ENCODE measurements at regions of chr15 and their contacts with region 1.

Region 1: DNA sequence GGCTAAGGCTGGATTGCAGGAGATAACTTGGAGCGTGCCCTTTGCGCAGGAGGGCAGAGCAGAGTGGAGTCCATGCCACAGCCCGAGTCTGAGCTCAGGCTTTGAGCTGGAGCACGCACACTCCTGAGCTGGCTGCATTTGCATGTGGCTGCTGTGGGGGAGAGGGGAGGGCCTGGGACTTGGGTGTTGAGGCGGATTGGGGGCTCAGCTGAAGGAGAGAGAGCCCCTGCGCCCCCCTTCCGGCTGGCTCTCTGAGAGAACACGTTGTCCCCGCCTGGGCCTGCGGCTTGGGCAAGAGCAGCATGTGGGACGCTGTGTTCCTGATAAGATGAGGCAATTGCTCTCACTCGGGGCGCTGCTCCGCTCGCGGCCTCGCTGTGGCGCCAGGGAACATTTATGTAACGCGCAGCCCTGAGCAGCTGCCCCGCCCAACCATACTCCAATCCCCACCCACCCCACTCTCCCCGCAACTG is 39.1 kb downstream of the KLF13 start:
- DNase-seq: peak; percentile 98
- H3K4me3 ChIP-seq: peak overlapping the region in 5 of 8 donors; percentile 7 to 57 (median 25)
- H3K27ac ChIP-seq: peak overlapping the region in 7 of 8 donors; percentile 62 to 100 (median 96)
- H3K4me1 ChIP-seq: peaks cover 20 to 100% (median 100%) of the 10 kb centered on the region in 6 donors
- H3K27me3 ChIP-seq: no peaks in the 10 kb centered on the region
- CTCF ChIP-seq: peak in 10 of 11 experiments; percentile 35 to 78 (median 56)
- POLR2A ChIP-seq: peak in 2 of 3 donors; percentile 38 to 63

Region 2: DNA sequence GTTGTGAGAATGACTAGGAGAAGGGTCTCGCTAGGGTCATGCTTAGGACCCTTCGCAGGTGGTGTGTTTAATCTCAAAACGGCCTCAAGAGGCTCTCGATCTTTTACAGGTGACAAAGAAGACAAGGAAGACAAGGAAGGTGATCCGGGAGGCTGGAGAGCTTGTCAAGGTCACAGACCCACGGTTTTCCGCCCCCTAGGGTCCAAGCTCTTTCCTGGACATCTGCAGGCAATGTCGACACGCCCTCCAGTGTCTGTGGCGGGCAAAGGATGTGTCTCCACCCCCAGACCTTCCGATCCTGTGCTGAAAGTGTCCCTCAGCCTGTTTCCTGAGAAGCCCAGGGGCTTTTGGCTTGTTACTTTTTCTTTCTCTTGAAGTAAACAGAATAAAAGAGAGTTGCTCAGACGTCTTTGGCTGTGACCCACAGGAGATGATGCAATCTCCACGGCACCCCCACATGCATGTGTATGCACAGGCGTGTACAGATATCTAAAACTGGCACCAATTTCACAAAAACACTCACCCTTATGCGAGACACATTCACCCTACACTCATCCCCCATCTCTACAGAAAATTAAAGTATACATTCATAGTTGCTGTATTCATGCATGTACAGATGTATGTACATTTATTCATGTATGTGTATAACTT is 69.7 kb after region 1 on chr15:
- intact Hi-C with region 1: loop called (anchors 10 kb)
- DNase-seq: peak; percentile 94
- H3K4me3 ChIP-seq: peak overlapping the region in 7 of 8 donors; percentile 6 to 59 (median 27)
- H3K27ac ChIP-seq: peak overlapping the region; percentile 42 to 94 (median 84)
- H3K4me1 ChIP-seq: peaks cover 0 to 89% (median 58%) of the 10 kb centered on the region in 6 donors
- H3K27me3 ChIP-seq: no peaks in the 10 kb centered on the region
- CTCF ChIP-seq: peak; percentile 45 to 88 (median 83)
- POLR2A ChIP-seq: no peak

Region 3: DNA sequence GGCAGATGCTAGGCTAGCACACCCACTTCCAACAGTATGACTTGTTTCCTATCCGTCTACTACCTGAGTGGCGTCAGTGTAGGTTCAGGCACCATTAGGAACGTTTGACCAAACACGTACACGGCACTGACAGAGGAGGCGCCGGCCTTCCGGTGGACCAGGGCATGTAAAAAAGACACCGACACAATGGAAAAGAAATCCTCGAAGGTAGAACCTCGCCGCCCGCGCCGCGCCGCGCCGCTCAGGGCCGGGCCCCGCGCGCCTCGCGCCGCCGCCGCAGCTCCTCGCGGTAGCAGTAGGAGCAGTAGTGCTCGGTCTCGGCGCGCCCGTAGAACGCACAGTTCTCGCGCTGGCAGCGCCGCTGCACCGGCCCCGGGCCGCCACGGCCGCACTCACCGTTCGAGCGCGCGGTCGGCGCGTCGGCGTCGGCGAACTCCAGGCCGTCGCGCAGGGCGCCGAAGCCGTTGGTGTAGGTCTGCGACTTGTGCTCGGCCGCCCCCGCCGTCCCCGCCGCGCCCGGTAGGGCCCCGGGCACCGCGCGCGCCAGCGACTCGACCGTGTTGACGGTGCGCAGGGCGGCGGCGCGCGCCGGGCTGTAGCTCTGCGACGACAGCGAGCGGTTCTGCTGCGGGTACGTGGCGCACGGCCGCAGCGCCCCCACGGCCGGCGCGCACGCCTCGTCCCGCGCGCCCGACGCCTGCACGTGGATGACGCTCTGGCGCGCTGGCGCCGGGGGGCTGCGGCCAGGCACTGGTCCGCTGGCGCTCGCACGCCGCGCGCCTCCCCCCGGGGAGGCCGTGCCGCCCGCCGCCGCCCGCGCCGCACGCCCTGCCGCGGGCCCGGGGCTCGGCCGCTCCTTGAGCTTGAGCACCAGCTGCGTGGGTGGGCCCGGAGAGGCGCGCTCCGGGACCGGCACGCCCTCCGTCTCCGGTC is 117.6 kb after region 1 on chr15:
- intact Hi-C with region 1: no loop called
- DNase-seq: peak; percentile 78
- H3K4me3 ChIP-seq: peak overlapping the region in 7 of 8 donors; percentile 36 to 75 (median 41)
- H3K27ac ChIP-seq: peak overlapping the region in 4 of 8 donors; percentile 41 to 73 (median 60)
- H3K4me1 ChIP-seq: peaks cover 0 to 40% (median 16%) of the 10 kb centered on the region in 6 donors
- H3K27me3 ChIP-seq: peaks cover 0 to 47% (median 9%) of the 10 kb centered on the region in 7 donors
- CTCF ChIP-seq: no peak
- POLR2A ChIP-seq: no peak

Measured in spleen (tissue), 13 donors.